ENCODE measurements at regions of chr6 and their contacts with region 1.

Region 1: GRCh38 chr6:56370561-56371211 is 123.3 kb upstream of the COL21A1 start:
- DNase-seq: no peak
- H3K4me3 ChIP-seq: no peak overlapping the region
- H3K4me3 Mint-ChIP-seq: peak overlapping the region; percentile 69
- H3K27ac Mint-ChIP-seq: no peak overlapping the region
- H3K4me1 ChIP-seq: peaks cover 31% of the 10 kb centered on the region
- H3K4me1 Mint-ChIP-seq: peaks cover 33% of the 10 kb centered on the region
- H3K27me3 ChIP-seq: no peaks in the 10 kb centered on the region
- H3K27me3 Mint-ChIP-seq: no peaks in the 10 kb centered on the region
- CTCF ChIP-seq: no peak

Region 2: GRCh38 chr6:56417827-56418226 is 47.1 kb after region 1 on chr6:
- CTCF ChIA-PET with region 1: interaction called, 8 read pairs
- POLR2A ChIA-PET with region 1: no interaction called
- intact Hi-C with region 1: loop called (anchors 1 kb)
- DNase-seq: peak in 1 of 2 experiments; percentile 15
- H3K4me3 ChIP-seq: no peak overlapping the region
- H3K4me3 Mint-ChIP-seq: no peak overlapping the region
- H3K27ac Mint-ChIP-seq: no peak overlapping the region
- H3K4me1 ChIP-seq: no peaks in the 10 kb centered on the region
- H3K4me1 Mint-ChIP-seq: peaks cover 6% of the 10 kb centered on the region
- H3K27me3 ChIP-seq: no peaks in the 10 kb centered on the region
- H3K27me3 Mint-ChIP-seq: no peaks in the 10 kb centered on the region
- CTCF ChIP-seq: peak; percentile 23 to 49

Region 3: GRCh38 chr6:56484669-56485068 is 114.0 kb after region 1 on chr6:
- CTCF ChIA-PET with region 1: no interaction called
- POLR2A ChIA-PET with region 1: no interaction called
- intact Hi-C with region 1: loop called (anchors 5 kb)
- DNase-seq: no peak
- H3K4me3 ChIP-seq: no peak overlapping the region
- H3K4me3 Mint-ChIP-seq: no peak overlapping the region
- H3K27ac Mint-ChIP-seq: no peak overlapping the region
- H3K4me1 ChIP-seq: peaks cover 20% of the 10 kb centered on the region
- H3K4me1 Mint-ChIP-seq: peaks cover 12% of the 10 kb centered on the region
- H3K27me3 ChIP-seq: no peaks in the 10 kb centered on the region
- H3K27me3 Mint-ChIP-seq: no peaks in the 10 kb centered on the region
- CTCF ChIP-seq: no peak

Region 4: DNA sequence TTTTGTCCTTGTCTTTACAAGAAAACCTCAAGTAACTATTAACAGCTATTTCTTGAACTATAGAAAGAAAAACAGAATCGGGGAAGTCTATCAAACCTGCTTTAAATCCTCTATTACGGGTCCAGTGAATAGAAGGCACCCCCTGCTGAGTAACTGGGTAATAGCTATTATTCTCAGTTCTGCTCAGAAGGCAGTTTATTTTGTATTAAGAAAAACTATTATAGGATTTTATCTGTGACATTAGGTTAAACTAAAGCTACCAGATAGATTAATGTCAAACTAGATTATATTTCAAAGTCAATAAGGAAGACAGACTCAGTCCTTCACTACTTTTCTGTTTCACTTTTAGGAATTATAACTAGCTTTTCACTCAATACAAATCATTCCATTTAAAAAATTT is 178.3 kb after region 1 on chr6:
- CTCF ChIA-PET with region 1: interaction called, 7 read pairs
- POLR2A ChIA-PET with region 1: no interaction called
- intact Hi-C with region 1: loop called (anchors 1 kb)
- DNase-seq: no peak
- H3K4me3 ChIP-seq: no peak overlapping the region
- H3K4me3 Mint-ChIP-seq: no peak overlapping the region
- H3K27ac Mint-ChIP-seq: no peak overlapping the region
- H3K4me1 ChIP-seq: 0 out of 2 replicates have a peak, but pooled peaks cover 7% of the 10 kb centered on the region
- H3K4me1 Mint-ChIP-seq: no peaks in the 10 kb centered on the region
- H3K27me3 ChIP-seq: no peaks in the 10 kb centered on the region
- H3K27me3 Mint-ChIP-seq: no peaks in the 10 kb centered on the region
- CTCF ChIP-seq: peak in 1 of 2 experiments; percentile 40

Region 5: GRCh38 chr6:56595490-56596122 is 224.9 kb after region 1 on chr6:
- CTCF ChIA-PET with region 1: interaction called, 11 read pairs
- POLR2A ChIA-PET with region 1: no interaction called
- intact Hi-C with region 1: loop called (anchors 1 kb)
- DNase-seq: peak in 1 of 2 experiments; percentile 35
- H3K4me3 ChIP-seq: no peak overlapping the region
- H3K4me3 Mint-ChIP-seq: no peak overlapping the region
- H3K27ac Mint-ChIP-seq: no peak overlapping the region
- H3K4me1 ChIP-seq: no peaks in the 10 kb centered on the region
- H3K4me1 Mint-ChIP-seq: no peaks in the 10 kb centered on the region
- H3K27me3 ChIP-seq: no peaks in the 10 kb centered on the region
- H3K27me3 Mint-ChIP-seq: no peaks in the 10 kb centered on the region
- CTCF ChIP-seq: peak; percentile 61 to 67